AG04450 (cell line): ENCODE measurements at regions of chr2 and their contacts with region 1.

Region 1: DNA sequence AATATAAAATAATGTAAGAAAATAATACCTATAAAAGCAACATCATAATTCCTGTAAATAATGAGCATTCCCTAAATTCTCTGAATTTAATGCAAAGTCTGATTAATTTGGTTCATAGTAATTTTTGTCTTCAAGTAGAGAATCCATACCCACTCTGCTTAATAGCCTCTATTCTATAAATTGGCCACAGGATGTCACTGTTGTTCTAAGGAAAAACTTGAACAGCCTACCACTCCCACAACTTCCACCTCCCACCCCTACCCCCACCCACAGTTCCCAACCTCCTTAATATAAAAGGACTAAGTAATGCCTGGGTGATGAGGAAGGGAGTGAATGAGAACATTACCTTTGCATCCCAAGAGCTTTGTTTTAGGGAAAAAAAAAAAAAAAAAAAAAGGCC is 27.2 kb upstream of the BBS5 start:
- DNase-seq: no peak
- H3K4me3 ChIP-seq: no peak overlapping the region
- H3K27ac ChIP-seq: no peak overlapping the region
- H3K27me3 ChIP-seq: no peaks in the 10 kb centered on the region
- CTCF ChIP-seq: peak; percentile 55

Region 2: GRCh38 chr2:169415233-169415748 is 36.8 kb before region 1 on chr2:
- CTCF ChIA-PET with region 1: interaction called, 10 read pairs
- POLR2A ChIA-PET with region 1: no interaction called
- DNase-seq: no peak
- H3K4me3 ChIP-seq: no peak overlapping the region
- H3K27ac ChIP-seq: no peak overlapping the region
- H3K27me3 ChIP-seq: no peaks in the 10 kb centered on the region
- CTCF ChIP-seq: no peak

Region 3: GRCh38 chr2:169426052-169426663 is 25.9 kb before region 1 on chr2:
- CTCF ChIA-PET with region 1: no interaction called
- POLR2A ChIA-PET with region 1: no interaction called
- DNase-seq: no peak
- H3K4me3 ChIP-seq: no peak overlapping the region
- H3K27ac ChIP-seq: no peak overlapping the region
- H3K27me3 ChIP-seq: no peaks in the 10 kb centered on the region
- CTCF ChIP-seq: no peak

Region 4: DNA sequence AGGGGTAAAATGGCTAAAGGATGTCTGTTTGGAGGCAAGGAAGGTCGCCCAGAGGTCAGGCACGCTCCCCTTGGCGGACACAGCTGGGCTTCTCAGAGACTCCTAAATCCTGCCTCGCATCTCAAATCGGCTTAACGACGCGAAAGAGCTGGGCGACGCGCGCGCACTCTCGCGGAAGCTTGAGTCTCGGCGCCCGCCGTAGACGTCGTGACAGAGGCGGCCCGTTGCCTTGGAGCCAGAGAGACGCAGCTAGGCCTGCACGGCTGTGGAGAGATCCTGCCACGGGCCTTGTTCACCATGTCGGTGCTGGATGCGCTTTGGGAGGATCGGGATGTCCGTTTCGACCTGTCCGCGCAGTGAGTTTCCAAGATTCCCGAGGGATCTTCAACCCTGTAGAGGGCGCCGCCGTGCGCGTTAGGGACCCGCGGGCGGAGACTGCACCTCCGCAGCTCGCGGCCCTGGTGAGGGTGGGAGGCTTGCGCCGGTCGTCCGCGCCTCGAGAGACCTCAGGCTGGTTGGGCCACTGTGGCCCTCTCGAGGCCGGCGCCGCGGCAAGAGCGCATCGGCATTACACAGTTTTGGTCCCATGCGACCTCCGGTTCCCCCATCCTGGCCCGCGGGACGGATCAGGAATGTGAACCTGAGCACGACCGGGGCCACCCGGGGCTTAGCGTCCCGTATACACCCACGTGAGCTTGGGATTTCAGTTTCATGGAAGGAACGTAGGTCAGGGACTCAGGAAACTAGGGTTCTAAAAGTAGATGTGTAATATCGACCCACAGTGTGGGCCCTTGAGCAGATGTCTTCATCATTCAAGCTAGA is 27.4 kb after region 1 on chr2 and contains the start of gene BBS5:
- CTCF ChIA-PET with region 1: interaction called, 11 read pairs
- POLR2A ChIA-PET with region 1: no interaction called
- DNase-seq: peak; percentile 58
- H3K4me3 ChIP-seq: peak within 1 kb of the TSS; percentile 78
- H3K27ac ChIP-seq: peak within 1 kb of the TSS; percentile 77
- H3K27me3 ChIP-seq: no peaks in the 10 kb centered on the region
- CTCF ChIP-seq: peak; percentile 62
- polyA plus RNA-seq, gene BBS5: 2.0 and 2.1 TPM in 2 replicates

Region 5: GRCh38 chr2:169767243-169767888 is 315.3 kb after region 1 on chr2:
- CTCF ChIA-PET with region 1: interaction called, 20 read pairs
- POLR2A ChIA-PET with region 1: interaction called, 4 read pairs
- DNase-seq: no peak
- H3K4me3 ChIP-seq: no peak overlapping the region
- H3K27ac ChIP-seq: no peak overlapping the region
- H3K27me3 ChIP-seq: peaks cover 12% of the 10 kb centered on the region
- CTCF ChIP-seq: peak; percentile 73

Region 6: DNA sequence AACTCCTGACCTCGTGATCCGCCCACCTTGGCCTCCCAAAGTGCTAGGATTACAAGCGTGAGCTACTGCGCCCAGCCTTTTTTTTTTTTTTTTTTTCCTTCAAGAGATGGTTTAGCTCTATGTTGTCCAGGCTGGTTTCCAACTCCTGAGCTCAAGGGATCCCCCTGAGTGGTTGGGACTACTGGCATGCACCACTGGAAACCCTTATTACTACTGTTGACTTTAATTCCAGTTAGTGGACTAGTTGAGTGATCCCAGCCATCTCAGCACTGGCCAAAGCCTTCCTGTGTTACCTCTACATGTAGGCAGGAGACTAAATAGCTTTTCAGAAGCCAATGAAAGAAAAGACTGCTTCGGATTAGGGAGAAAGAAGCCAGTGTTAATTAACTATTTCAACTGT is 338.5 kb after region 1 on chr2:
- CTCF ChIA-PET with region 1: interaction called, 25 read pairs
- POLR2A ChIA-PET with region 1: no interaction called
- DNase-seq: no peak
- H3K4me3 ChIP-seq: no peak overlapping the region
- H3K27ac ChIP-seq: no peak overlapping the region
- H3K27me3 ChIP-seq: peaks cover 3% of the 10 kb centered on the region
- CTCF ChIP-seq: no peak

Region 7: DNA sequence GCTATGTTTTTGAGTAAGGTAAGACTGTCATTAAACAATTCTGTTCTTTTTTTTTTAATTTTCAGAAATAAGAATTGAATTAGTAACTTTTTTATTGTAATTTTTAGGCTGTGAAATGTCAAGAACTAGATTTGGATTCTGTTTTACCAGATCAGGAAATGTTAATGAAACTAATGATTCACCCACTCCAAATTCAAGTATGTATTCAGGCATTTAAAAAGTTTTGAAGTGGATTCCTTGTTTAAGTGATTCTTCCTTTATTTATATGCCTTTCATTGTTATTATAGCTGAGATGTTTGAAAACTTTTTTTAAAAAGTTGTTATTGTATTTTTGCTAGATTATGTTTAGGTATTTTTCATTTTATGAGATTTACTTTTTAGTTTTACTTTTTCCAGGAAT is 471.9 kb after region 1 on chr2:
- CTCF ChIA-PET with region 1: interaction called, 34 read pairs
- POLR2A ChIA-PET with region 1: no interaction called
- DNase-seq: no peak
- H3K4me3 ChIP-seq: no peak overlapping the region
- H3K27ac ChIP-seq: no peak overlapping the region
- H3K27me3 ChIP-seq: no peaks in the 10 kb centered on the region
- CTCF ChIP-seq: no peak

Region 8: DNA sequence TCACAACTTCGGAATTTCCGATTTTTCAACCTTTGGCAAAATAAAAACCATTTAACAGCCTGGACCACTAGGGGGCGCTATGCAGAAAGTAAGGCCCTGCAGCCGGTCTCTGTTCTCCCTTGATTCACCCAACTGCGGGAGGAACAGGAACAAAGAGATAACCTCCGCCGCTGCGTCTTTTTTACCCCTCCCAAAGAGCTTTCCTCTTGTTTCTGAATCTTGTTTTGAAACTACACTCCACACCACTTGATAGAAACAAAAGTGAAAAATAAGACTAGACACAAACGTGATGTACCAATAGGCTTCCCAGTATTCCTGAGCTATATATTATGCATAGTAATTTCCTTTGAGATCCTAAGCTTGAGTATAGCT is 957.1 kb after region 1 on chr2:
- CTCF ChIA-PET with region 1: interaction called, 10 read pairs
- POLR2A ChIA-PET with region 1: no interaction called
- DNase-seq: peak; percentile 16
- H3K4me3 ChIP-seq: no peak overlapping the region
- H3K27ac ChIP-seq: no peak overlapping the region
- H3K27me3 ChIP-seq: peaks cover 4% of the 10 kb centered on the region
- CTCF ChIP-seq: peak; percentile 79